Common myeloid progenitor, CD34-positive (primary cell): ENCODE measurements at regions of chr12 and their contacts with region 1.

Region 1: GRCh38 chr12:98424726-98425401 is 90.5 kb upstream of the TMPO start:
- DNase-seq: peak; percentile 66 to 82 (median 76)
- H3K4me3 ChIP-seq: peak overlapping the region in 1 of 7 experiments; percentile 43
- H3K27ac ChIP-seq: no peak overlapping the region
- H3K4me1 ChIP-seq: peaks cover 0 to 7% (median 0%) of the 10 kb centered on the region in 4 experiments
- H3K27me3 ChIP-seq: no peaks in the 10 kb centered on the region

Region 2: DNA sequence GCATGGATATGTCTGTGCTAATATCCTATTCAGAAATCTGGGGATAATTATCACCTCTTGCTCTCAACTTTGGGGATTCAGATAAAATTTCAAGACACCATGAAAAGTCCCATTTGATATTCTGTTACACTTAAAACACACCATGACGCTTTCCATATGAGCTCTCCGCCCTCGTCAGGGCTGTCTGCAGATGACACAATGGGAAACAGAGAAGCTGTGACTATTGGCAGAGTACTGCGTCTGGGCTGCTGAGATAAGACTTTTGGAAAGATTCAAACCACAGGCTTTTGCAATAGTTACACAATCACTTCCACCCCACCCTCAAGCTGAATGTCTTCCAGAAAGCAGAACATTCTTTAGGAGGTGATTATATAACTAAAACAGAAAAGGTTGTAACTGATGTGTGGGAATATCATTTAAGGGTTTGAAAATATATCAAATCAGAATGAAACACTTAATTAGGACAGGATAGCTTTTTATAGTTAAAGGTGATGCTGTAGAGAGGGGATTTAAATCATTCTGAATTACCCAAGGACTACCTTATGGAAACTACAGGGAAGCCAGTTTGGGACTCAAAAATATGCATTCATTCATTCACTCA is 15.2 kb after region 1 on chr12:
- CTCF ChIA-PET with region 1: interaction called, 89 read pairs
- POLR2A ChIA-PET with region 1: no interaction called
- DNase-seq: peak; percentile 98 to 99 (median 99)
- H3K4me3 ChIP-seq: peak overlapping the region in 5 of 7 experiments; percentile 8 to 48 (median 33)
- H3K27ac ChIP-seq: peak overlapping the region in 1 of 2 experiments; percentile 56
- H3K4me1 ChIP-seq: peaks cover 13 to 27% (median 22%) of the 10 kb centered on the region in 4 experiments
- H3K27me3 ChIP-seq: no peaks in the 10 kb centered on the region

Region 3: DNA sequence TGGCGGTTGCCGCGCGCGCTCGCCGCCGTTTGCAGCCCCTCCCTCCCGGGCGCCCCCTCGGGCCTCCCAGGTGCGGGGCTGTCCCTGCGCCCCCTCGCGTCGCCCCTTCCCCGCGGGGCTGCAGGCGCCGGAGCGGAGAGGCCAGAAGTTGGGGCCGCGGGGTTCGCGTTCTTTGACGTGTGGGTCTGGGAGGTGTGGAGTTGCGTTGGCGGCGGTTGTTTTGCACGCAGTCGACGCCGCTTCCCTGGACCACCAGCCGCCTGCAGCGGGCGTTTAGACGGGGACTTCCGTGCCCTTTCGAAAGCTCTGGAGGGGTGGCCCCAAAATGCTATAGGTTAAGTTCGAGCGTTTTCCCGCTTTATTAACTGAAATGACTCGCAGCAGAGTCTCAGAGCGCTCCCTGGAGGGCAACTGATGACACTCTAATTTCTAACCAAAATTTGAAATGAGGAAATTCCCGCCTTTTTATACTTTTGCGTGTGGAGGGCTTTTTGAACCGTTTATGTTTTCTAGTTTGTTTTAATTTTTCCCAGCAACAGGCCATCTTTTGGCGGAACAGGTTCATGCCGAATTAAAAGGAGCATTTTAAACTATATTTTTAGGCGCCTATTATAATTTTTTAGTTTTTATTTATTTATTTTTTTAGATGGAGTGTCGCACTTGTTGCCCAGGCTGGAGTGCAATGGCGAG is 91.5 kb after region 1 on chr12:
- CTCF ChIA-PET with region 1: interaction called, 45 read pairs
- POLR2A ChIA-PET with region 1: no interaction called
- DNase-seq: peak; percentile 90 to 96 (median 95)
- H3K4me3 ChIP-seq: peak overlapping the region; percentile 93 to 100 (median 98)
- H3K27ac ChIP-seq: peak overlapping the region; percentile 86 to 95
- H3K4me1 ChIP-seq: peaks cover 12 to 38% (median 22%) of the 10 kb centered on the region in 4 experiments
- H3K27me3 ChIP-seq: no peaks in the 10 kb centered on the region